AG04450 (cell line): ENCODE measurements at regions of chr1 and their contacts with region 1.

Region 1: GRCh38 chr1:19220991-19221390 is 10.9 kb upstream of the UBR4 start:
- DNase-seq: no peak
- H3K4me3 ChIP-seq: no peak overlapping the region
- H3K27ac ChIP-seq: no peak overlapping the region
- H3K27me3 ChIP-seq: no peaks in the 10 kb centered on the region
- CTCF ChIP-seq: no peak

Region 2: GRCh38 chr1:19209990-19210771 is 10.8 kb before region 1 on chr1 and contains the start of gene UBR4:
- CTCF ChIA-PET with region 1: interaction called, 11 read pairs
- POLR2A ChIA-PET with region 1: interaction called, 5 read pairs
- DNase-seq: peak; percentile 89
- H3K4me3 ChIP-seq: peak within 1 kb of the TSS; percentile 92
- H3K27ac ChIP-seq: peak within 1 kb of the TSS; percentile 96
- H3K27me3 ChIP-seq: no peaks in the 10 kb centered on the region
- CTCF ChIP-seq: no peak
- polyA plus RNA-seq, gene UBR4: 91.9 and 152 TPM in 2 replicates